Mammary epithelial cell (primary cell): ENCODE measurements at regions of chr3 and their contacts with region 1.

Region 1: GRCh38 chr3:134348524-134348923 is 25.7 kb downstream of the AMOTL2 start:
- DNase-seq: peak; percentile 76
- H3K4me3 ChIP-seq: no peak overlapping the region
- H3K27ac ChIP-seq: no peak overlapping the region
- H3K4me1 ChIP-seq: peaks cover 42% of the 10 kb centered on the region
- H3K27me3 ChIP-seq: no peaks in the 10 kb centered on the region
- CTCF ChIP-seq: no peak

Region 2: GRCh38 chr3:134242649-134243617 is 105.6 kb before region 1 on chr3:
- CTCF ChIA-PET with region 1: no interaction called
- dilution Hi-C with region 1: loop called (anchors 5 kb)
- in situ Hi-C with region 1: no loop called
- intact Hi-C with region 1: no loop called
- DNase-seq: peak; percentile 90
- H3K4me3 ChIP-seq: peak overlapping the region in 1 of 3 experiments; percentile 21
- H3K27ac ChIP-seq: peak overlapping the region; percentile 47
- H3K4me1 ChIP-seq: peaks cover 59% of the 10 kb centered on the region
- H3K27me3 ChIP-seq: no peaks in the 10 kb centered on the region
- CTCF ChIP-seq: no peak

Region 3: GRCh38 chr3:134299185-134299887 is 49.2 kb before region 1 on chr3:
- CTCF ChIA-PET with region 1: no interaction called
- dilution Hi-C with region 1: loop called (anchors 5 kb)
- in situ Hi-C with region 1: no loop called
- intact Hi-C with region 1: no loop called
- DNase-seq: peak; percentile 27
- H3K4me3 ChIP-seq: no peak overlapping the region
- H3K27ac ChIP-seq: no peak overlapping the region
- H3K4me1 ChIP-seq: peaks cover 3% of the 10 kb centered on the region
- H3K27me3 ChIP-seq: no peaks in the 10 kb centered on the region
- CTCF ChIP-seq: peak; percentile 10 to 62

Region 4: GRCh38 chr3:134326760-134327593 is 21.5 kb before region 1 on chr3:
- CTCF ChIA-PET with region 1: no interaction called
- dilution Hi-C with region 1: no loop called
- in situ Hi-C with region 1: no loop called
- intact Hi-C with region 1: loop called (anchors 1 kb)
- DNase-seq: peak; percentile 86
- H3K4me3 ChIP-seq: peak overlapping the region in 1 of 3 experiments; percentile 6
- H3K27ac ChIP-seq: peak overlapping the region; percentile 84
- H3K4me1 ChIP-seq: peaks cover 75% of the 10 kb centered on the region
- H3K27me3 ChIP-seq: no peaks in the 10 kb centered on the region
- CTCF ChIP-seq: no peak

Region 5: DNA sequence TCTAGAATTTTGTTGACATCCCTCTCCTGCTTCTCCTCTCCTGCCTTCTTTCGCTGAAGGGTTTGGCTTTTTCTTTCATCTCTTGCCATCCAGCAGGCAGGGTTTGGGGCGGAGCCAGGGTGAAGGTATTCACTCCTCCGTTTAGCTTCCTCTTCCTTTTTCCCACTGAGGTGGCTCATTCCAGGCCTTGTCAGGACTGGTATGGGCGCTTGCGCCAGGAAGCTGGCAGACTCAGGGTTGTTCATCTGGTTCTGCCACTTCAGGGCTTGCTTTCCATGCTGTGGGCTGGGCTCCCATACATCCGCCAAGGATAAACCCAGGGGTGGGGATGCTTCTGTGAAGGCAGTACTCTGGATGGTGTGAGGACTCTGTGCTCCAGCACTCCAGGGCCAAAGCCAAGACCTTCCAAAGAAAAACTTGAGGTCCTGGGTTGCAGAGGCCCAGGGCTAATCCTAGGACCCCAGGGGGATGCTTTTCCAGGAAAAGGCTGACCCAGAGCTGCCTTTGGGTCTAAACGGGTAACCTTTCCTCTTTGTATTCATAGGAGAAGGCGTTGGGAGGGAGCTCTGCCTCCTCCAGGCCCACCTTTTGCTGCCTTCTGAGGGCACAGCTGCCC is 33.4 kb after region 1 on chr3:
- CTCF ChIA-PET with region 1: no interaction called
- dilution Hi-C with region 1: loop called (anchors 5 kb)
- in situ Hi-C with region 1: no loop called
- intact Hi-C with region 1: no loop called
- DNase-seq: peak; percentile 97
- H3K4me3 ChIP-seq: no peak overlapping the region
- H3K27ac ChIP-seq: peak overlapping the region; percentile 67
- H3K4me1 ChIP-seq: peaks cover 25% of the 10 kb centered on the region
- H3K27me3 ChIP-seq: no peaks in the 10 kb centered on the region
- CTCF ChIP-seq: no peak

Region 6: GRCh38 chr3:134473868-134474546 is 125.5 kb after region 1 on chr3:
- CTCF ChIA-PET with region 1: no interaction called
- dilution Hi-C with region 1: loop called (anchors 5 kb)
- in situ Hi-C with region 1: no loop called
- intact Hi-C with region 1: no loop called
- DNase-seq: peak; percentile 82
- H3K4me3 ChIP-seq: no peak overlapping the region
- H3K27ac ChIP-seq: peak overlapping the region; percentile 49
- H3K4me1 ChIP-seq: peaks cover 58% of the 10 kb centered on the region
- H3K27me3 ChIP-seq: no peaks in the 10 kb centered on the region
- CTCF ChIP-seq: peak; percentile 60 to 70